Heart left ventricle (tissue), 16 donors: ENCODE measurements at regions of chr16 and their contacts with region 1.

Region 1: GRCh38 chr16:65249768-65250167 is 127.9 kb upstream of the CDH11 start:
- DNase-seq: peak; percentile 77 to 87 (median 81)
- ATAC-seq: peak; percentile 95 to 99 (median 98)
- H3K4me3 ChIP-seq: no peak overlapping the region
- H3K27ac ChIP-seq: peak overlapping the region; percentile 11 to 82 (median 68)
- H3K4me1 ChIP-seq: peaks cover 0 to 27% (median 8%) of the 10 kb centered on the region in 12 donors
- H3K27me3 ChIP-seq: no peaks in the 10 kb centered on the region
- CTCF ChIP-seq: peak in 3 of 12 donors; percentile 24 to 25 (median 24)
- POLR2A ChIP-seq: no peak

Region 2: DNA sequence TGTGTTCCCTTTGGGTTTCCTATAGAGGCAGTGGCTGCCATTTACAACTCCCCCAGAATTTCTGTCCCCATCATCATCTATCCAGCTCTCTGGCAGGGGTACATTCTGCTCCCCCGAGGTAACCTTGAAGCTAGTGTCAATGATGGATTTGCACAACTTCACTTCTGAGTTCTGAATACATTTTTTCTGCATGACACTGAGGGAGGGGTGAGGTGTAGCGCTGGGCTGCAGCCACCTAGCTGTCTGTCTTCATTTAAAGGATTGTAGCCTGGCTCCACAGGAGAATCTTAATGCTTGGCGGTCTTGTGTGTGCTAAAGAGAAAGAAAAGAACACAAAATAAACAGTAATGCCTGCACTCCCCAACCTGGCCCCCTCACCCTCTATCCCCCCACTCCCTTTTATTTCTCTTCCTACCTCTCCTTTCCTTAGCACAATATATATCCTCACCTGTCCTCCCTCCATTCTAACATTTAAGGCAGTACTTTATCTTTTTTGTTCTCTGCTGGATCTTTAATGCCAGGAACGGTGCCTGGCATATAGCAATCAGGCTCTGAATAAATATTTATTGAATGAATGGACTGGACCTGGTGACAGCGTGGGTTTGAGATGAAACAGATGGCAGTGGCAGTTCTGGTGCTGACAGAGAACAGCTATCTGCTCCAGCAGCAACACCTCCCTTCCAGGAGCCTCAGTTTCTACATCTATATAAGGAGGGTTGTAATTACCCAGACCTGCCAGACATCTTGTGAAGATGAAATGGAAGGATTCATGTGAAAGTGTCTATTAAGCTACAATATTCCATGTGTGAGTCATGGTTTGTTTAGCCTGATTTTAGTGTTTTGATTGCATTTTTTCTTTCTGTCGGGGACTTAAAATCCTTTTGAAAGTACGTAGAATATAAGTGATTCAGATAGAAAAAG is 35.6 kb after region 1 on chr16:
- intact Hi-C with region 1: loop called in 1 of 10 experiments (anchors 2 kb)
- DNase-seq: peak in 4 of 5 donors; percentile 42 to 76 (median 55)
- ATAC-seq: peak; percentile 79 to 95 (median 91)
- H3K4me3 ChIP-seq: no peak overlapping the region
- H3K27ac ChIP-seq: no peak overlapping the region
- H3K4me1 ChIP-seq: peaks cover 0 to 15% (median 2%) of the 10 kb centered on the region in 12 donors
- H3K27me3 ChIP-seq: no peaks in the 10 kb centered on the region
- CTCF ChIP-seq: no peak
- POLR2A ChIP-seq: no peak

Region 3: DNA sequence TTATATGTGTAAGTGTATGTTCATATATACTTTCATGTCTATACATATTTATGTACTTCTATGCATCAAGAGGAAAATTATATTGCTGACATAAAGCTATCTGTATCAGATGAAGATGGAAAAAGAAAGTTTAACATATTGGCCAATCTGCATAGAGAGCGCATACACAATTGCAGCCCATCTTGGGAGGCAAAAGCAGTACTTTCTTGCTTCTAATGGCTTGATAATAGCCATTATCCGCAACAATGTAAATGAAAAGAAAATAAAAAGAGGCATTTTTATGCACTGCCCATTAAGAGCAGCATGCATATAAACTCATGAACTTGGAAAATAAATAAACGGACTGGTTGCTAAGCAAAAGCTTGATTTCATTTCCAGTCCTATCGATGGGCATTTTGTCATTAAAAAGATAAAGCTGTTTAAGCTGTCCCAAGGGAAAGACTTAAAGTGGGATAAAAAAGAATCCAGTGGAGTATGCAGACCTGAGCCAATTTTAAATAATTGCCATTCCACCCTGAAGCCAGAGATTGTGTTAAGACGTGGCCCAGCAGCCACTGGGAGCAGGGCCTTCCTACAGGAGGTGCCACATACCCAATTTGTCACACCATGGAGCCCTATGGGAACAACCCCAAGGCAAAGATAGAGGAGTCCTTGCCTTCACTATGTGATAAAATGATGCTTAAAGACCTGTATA is 55.6 kb after region 1 on chr16:
- intact Hi-C with region 1: loop called in 1 of 10 experiments (anchors 5 kb)
- DNase-seq: no peak
- ATAC-seq: no peak
- H3K4me3 ChIP-seq: no peak overlapping the region
- H3K27ac ChIP-seq: no peak overlapping the region
- H3K4me1 ChIP-seq: peaks cover 0 to 14% (median 0%) of the 10 kb centered on the region in 12 donors
- H3K27me3 ChIP-seq: no peaks in the 10 kb centered on the region
- CTCF ChIP-seq: peak in 1 of 12 donors; percentile 8
- POLR2A ChIP-seq: no peak